Body of pancreas (tissue), 4 donors: ENCODE measurements at regions of chr4 and their contacts with region 1.

Region 1: DNA sequence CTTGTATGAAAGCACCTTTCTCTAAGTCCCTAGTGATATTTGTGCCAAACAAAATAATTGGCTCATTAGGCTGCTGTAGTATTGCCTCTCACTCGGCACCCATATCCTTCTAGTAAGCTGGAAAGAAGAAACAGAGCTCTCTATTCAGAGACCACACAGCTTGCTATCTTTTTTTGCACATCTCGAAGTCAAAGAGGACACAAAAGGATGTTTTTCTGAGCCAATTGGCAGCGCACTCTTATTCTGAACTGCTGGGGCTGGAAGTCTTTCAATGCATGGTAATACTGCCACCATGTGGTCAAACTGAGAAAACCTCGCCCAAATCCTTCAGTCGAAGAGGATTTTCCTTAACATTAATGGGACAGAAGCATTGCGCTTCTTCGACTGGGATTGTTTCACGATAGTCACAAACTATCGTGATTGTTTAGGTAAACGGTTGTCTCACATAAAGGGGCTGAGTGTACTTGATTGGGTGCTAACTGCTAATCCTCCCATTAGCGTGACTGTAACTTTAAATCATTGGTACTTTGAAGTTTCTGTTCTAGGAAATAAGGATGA is 572.0 kb upstream of the LCORL start:
- DNase-seq: peak; percentile 57 to 67 (median 64)
- ATAC-seq: peak; percentile 59
- H3K4me3 ChIP-seq: no peak overlapping the region
- H3K27ac ChIP-seq: no peak overlapping the region
- H3K4me1 ChIP-seq: peaks cover 3% of the 10 kb centered on the region
- H3K27me3 ChIP-seq: no peaks in the 10 kb centered on the region
- CTCF ChIP-seq: peak; percentile 59 to 85 (median 82)
- POLR2A ChIP-seq: no peak

Region 2: DNA sequence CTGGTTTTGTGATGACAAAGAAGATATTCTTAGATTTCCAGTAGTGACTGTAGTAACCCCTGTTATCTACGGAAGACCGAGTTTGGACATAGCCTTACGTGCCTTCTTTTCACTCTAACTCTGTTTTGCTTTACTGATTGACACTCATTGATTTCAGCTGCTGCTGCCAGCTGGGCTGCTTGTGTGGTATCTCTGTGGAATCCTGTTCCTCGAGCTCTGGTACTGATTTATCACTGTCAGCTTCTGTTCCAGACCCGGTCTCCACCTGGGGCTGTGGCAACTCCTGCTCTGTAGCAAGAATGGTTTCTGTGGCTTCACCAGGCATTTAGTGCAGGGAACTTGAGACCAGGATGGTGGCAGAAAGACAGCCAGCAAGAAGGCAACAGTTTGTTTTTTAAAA is 1041.1 kb before region 1 on chr4:
- intact Hi-C with region 1: loop called (anchors 10 kb)
- DNase-seq: peak in 3 of 4 donors; percentile 20 to 37 (median 28)
- ATAC-seq: peak; percentile 50
- H3K4me3 ChIP-seq: no peak overlapping the region
- H3K27ac ChIP-seq: peak overlapping the region in 1 of 4 donors; percentile 8
- H3K4me1 ChIP-seq: no peaks in the 10 kb centered on the region
- H3K27me3 ChIP-seq: no peaks in the 10 kb centered on the region
- CTCF ChIP-seq: no peak
- POLR2A ChIP-seq: no peak

Region 3: GRCh38 chr4:17810260-17811077 is 783.1 kb before region 1 on chr4 and contains the starts of genes DCAF16 and NCAPG:
- intact Hi-C with region 1: loop called (anchors 10 kb)
- DNase-seq: peak; percentile 99 to 100 (median 100)
- ATAC-seq: peak; percentile 100
- H3K4me3 ChIP-seq: peak within 1 kb of the TSS; percentile 53 to 84
- H3K27ac ChIP-seq: peak within 1 kb of the TSS; percentile 90 to 97 (median 94)
- H3K4me1 ChIP-seq: peaks cover 33% of the 10 kb centered on the region
- H3K27me3 ChIP-seq: no peaks in the 10 kb centered on the region
- CTCF ChIP-seq: peak in 1 of 7 experiments; percentile 3
- POLR2A ChIP-seq: peak; percentile 88 to 98 (median 98)
- total RNA-seq, gene DCAF16: 10.9 to 15.6 TPM
- total RNA-seq, gene NCAPG: 0.26 to 0.33 TPM